ENCODE measurements at regions of chr18 and their contacts with region 1.

Region 1: DNA sequence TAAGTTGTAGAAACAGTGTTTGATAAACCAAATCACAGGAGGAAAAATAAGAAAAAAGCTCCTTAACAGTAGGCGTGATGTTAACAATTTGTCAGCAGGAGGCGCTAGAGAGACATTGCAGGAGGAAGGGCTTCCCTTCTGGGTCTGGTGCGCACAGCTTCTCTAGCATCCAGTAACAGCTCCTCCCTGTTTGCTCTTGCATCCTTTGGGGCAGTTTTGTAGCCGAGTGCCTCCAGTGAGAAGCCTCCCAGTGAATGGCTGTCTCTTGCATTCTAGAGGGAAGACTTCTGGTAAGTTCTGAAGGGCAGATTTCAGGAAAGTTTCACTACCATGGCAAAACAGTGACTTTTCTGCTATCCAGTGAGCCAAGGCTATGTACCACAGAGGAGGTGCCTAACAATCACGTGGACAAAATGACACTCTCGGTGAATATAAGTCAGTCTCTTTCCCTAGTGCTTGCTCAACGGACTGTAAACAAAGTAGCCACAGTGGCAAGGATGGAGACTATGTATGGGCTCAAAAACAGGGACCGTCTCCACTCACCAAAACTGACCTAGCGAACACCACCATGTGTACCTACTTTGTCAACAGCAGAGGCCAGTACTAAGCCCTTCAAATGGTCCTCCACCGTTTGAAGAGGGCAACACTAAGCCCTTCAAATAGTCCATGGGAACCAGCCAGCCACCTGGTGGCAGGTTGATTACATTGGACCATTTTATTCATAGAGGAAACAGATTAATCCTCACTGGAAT is 9.6 kb upstream of the ZNF396 start:
- DNase-seq: peak; percentile 82
- H3K4me3 ChIP-seq: no peak overlapping the region
- H3K27ac ChIP-seq: no peak overlapping the region
- H3K4me1 ChIP-seq: no peaks in the 10 kb centered on the region
- H3K27me3 ChIP-seq: no peaks in the 10 kb centered on the region
- CTCF ChIP-seq: peak; percentile 79 to 83
- POLR2A ChIP-seq: no peak

Region 2: GRCh38 chr18:35005963-35006577 is 380.7 kb before region 1 on chr18:
- CTCF ChIA-PET with region 1: interaction called, 11 read pairs
- POLR2A ChIA-PET with region 1: no interaction called
- dilution Hi-C with region 1: no loop called
- intact Hi-C with region 1: no loop called
- DNase-seq: peak; percentile 83
- H3K4me3 ChIP-seq: no peak overlapping the region
- H3K27ac ChIP-seq: no peak overlapping the region
- H3K4me1 ChIP-seq: peaks cover 4% of the 10 kb centered on the region
- H3K27me3 ChIP-seq: no peaks in the 10 kb centered on the region
- CTCF ChIP-seq: peak; percentile 27 to 38
- POLR2A ChIP-seq: no peak

Region 3: DNA sequence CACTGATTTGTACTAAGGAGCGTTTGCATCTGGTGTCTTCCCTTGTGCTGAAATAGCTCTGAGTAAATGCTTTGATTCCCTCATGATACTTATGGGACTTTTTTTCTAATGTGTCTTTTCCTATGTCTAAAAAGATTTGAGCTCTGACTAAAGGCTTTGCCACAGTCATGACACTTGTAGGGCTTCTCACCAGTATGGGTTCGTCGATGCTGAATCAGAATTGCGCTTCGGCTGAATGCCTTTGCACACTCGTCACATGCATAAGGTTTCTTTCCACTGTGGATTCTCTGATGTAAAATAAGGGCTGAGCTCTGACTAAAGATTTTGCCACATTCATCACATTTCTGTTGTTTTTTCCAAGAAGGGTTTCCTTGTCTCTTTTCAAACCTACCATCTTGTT is 17.6 kb before region 1 on chr18:
- CTCF ChIA-PET with region 1: interaction called, 13 read pairs
- POLR2A ChIA-PET with region 1: no interaction called
- dilution Hi-C with region 1: no loop called
- intact Hi-C with region 1: no loop called
- DNase-seq: no peak
- H3K4me3 ChIP-seq: no peak overlapping the region
- H3K27ac ChIP-seq: no peak overlapping the region
- H3K4me1 ChIP-seq: no peaks in the 10 kb centered on the region
- H3K27me3 ChIP-seq: peaks cover 3 to 4% of the 10 kb centered on the region in 2 experiments
- CTCF ChIP-seq: no peak
- POLR2A ChIP-seq: no peak

Region 4: DNA sequence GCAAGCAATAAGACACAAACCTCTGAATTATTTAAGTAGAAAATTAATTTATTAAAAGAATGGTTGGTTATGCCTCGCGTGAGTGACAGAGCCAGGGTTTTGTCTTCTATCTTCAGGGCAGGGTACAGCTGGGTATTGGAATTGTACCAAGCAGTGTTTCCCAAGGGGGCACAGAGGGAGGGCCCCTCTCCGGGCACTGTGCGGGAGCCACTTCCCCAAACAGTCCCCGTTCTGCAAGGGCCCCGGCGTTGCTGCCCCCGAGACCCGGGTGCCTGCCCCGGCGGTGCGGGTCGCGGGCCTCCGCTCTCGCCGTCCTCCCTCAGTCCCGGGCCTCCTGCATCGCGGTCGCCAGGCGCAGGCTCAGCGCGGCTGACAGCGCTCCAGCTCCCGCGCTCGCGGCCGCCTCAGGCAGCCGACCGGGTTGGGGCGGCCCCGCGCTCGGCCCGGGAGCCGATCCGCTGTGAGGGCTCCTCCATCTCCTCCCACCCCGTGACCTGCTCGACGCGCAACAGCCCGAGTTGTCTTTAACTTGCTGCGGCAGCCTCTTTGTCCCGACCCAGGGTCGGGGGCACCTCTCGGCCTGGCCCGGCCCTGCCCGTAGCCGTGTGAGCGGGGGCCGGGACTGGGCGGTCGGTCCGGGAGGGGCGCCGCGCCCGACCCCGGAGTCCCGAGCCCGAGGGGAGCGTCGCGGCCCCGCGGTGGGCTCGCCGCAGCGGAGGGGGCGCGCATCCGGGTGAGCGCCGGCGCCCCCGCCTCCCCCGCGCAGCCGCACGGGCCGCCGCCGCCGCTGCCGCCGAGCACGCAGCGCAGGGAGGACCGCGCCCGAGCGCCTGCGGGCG is 194.1 kb after region 1 on chr18:
- CTCF ChIA-PET with region 1: interaction called, 10 read pairs
- POLR2A ChIA-PET with region 1: no interaction called
- dilution Hi-C with region 1: no loop called
- intact Hi-C with region 1: loop called (anchors 5 kb)
- DNase-seq: peak; percentile 58
- H3K4me3 ChIP-seq: peak overlapping the region; percentile 67 to 70 (median 67)
- H3K27ac ChIP-seq: peak overlapping the region; percentile 84
- H3K4me1 ChIP-seq: peaks cover 11% of the 10 kb centered on the region
- H3K27me3 ChIP-seq: no peaks in the 10 kb centered on the region
- CTCF ChIP-seq: no peak
- POLR2A ChIP-seq: no peak

Region 5: DNA sequence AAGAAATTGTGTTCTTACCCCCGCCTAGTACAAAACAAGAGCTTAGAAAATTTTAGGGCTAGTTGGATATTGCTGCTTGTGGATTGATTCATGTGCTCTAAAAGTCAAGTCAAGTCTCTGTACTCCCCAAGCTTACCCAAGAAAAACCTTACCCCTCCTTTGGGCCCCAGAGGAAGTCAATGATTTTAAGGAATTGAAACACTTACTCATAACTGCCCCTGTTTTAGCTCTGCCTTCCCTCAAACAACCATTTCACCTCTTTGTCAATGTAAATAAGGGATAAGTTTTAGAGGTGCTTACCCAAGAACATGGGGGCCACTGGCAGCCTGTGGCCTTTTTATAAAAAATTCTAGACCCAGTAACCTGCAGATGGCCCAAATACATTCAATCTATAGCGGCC is 449.1 kb after region 1 on chr18:
- CTCF ChIA-PET with region 1: no interaction called
- POLR2A ChIA-PET with region 1: no interaction called
- dilution Hi-C with region 1: no loop called
- intact Hi-C with region 1: loop called (anchors 10 kb)
- DNase-seq: no peak
- H3K4me3 ChIP-seq: no peak overlapping the region
- H3K27ac ChIP-seq: no peak overlapping the region
- H3K4me1 ChIP-seq: no peaks in the 10 kb centered on the region
- H3K27me3 ChIP-seq: peaks cover 0 to 21% of the 10 kb centered on the region in 2 experiments
- CTCF ChIP-seq: no peak
- POLR2A ChIP-seq: no peak

Region 6: DNA sequence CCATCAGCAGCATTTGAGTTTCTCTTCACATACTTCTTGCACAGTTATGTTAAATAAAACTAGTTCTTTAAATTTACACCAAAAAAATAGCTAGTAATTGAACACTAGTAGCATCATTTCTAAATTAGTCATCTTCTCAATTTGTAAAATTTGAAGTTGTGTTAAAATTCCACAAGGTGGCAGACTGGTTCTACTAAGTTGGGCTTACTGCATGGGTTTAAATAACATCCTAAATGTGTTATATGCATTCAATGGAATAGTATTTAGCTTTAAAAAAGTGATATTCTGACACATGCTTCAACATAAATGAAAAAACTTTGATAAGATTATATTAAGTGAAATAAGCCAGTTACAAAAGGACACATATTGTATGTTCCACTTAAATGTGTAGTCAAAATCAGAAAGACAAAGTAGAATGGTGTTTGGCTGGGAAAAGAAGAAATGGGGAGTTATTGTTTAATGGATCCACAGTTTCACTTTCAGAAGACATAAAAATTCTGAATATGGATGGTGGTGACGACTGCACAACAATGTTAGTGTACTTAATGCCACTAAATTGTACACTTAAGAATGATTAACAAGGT is 709.3 kb after region 1 on chr18:
- CTCF ChIA-PET with region 1: interaction called, 4 read pairs
- POLR2A ChIA-PET with region 1: no interaction called
- dilution Hi-C with region 1: no loop called
- intact Hi-C with region 1: loop called (anchors 10 kb)
- DNase-seq: peak; percentile 55
- H3K4me3 ChIP-seq: no peak overlapping the region
- H3K27ac ChIP-seq: no peak overlapping the region
- H3K4me1 ChIP-seq: no peaks in the 10 kb centered on the region
- H3K27me3 ChIP-seq: peaks cover 17 to 18% of the 10 kb centered on the region in 2 experiments
- CTCF ChIP-seq: peak; percentile 19 to 29
- POLR2A ChIP-seq: no peak

Region 7: GRCh38 chr18:36162981-36163380 is 776.2 kb after region 1 on chr18:
- CTCF ChIA-PET with region 1: no interaction called
- POLR2A ChIA-PET with region 1: no interaction called
- dilution Hi-C with region 1: no loop called
- intact Hi-C with region 1: no loop called
- DNase-seq: peak; percentile 79
- H3K4me3 ChIP-seq: no peak overlapping the region
- H3K27ac ChIP-seq: peak overlapping the region; percentile 63
- H3K4me1 ChIP-seq: peaks cover 32% of the 10 kb centered on the region
- H3K27me3 ChIP-seq: no peaks in the 10 kb centered on the region
- CTCF ChIP-seq: no peak
- POLR2A ChIP-seq: no peak

Measured in endothelial cell of umbilical vein (primary cell).